Heart right ventricle (tissue), 16 donors: ENCODE measurements at regions of chr5 and their contacts with region 1.

Region 1: DNA sequence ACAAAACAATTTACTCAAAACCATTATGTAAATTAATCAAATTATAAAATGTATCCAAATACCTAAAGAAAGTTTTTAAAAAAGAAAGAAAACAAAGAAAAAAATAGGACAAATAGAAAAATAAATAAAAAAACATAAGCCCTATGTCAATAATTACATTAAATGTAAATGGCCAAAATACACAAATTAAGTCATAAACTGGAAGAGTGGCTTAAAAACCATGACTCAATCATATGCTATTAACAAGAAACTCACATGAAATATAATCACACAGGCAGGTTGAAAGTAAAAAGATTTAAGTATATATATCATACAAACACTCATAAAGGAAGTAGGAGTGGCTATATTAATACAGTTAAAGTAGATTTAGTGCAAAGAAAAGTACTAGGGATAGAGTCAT is 95.3 kb downstream of the PRELID2 start:
- DNase-seq: no peak
- ATAC-seq: no peak
- H3K4me3 ChIP-seq: no peak overlapping the region
- H3K27ac ChIP-seq: no peak overlapping the region
- H3K4me1 ChIP-seq: no peaks in the 10 kb centered on the region
- H3K27me3 ChIP-seq: no peaks in the 10 kb centered on the region
- CTCF ChIP-seq: no peak

Region 2: DNA sequence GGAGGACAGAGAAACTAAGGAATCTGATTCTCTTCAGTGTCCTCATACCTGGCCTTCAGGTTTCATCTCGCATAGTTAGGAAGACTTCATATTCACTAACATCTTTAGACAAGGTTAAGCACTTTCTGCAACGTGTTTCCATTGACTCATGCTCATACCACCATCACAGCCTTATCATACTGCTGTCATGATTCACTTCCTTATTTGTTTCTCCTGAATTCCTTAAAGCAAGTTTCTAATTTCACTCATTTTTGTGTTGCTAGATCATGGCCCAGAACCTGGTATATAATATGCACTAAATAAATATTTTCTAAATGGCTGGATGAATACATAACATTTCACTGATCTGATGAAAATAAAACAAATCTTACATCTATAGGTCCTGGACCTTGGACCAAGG is 377.6 kb before region 1 on chr5:
- intact Hi-C with region 1: loop called in 1 of 10 experiments (anchors 10 kb)
- DNase-seq: no peak
- ATAC-seq: no peak
- H3K4me3 ChIP-seq: no peak overlapping the region
- H3K27ac ChIP-seq: no peak overlapping the region
- H3K4me1 ChIP-seq: no peaks in the 10 kb centered on the region
- H3K27me3 ChIP-seq: no peaks in the 10 kb centered on the region
- CTCF ChIP-seq: no peak